Dendritic cell treated with granulocyte-macrophage colony-stimulating factor and Interleukin-4, amounts not matched to agents 40 ng/mL and 50 ng/mL, for 4 days (primary cell): ENCODE measurements at regions of chr5 and their contacts with region 1.

Region 1: GRCh38 chr5:143319437-143320227 is 83.9 kb downstream of the NR3C1 start:
- H3K4me3 Mint-ChIP-seq: no peak overlapping the region
- H3K27ac Mint-ChIP-seq: no peak overlapping the region
- H3K4me1 Mint-ChIP-seq: peaks cover 43% of the 10 kb centered on the region
- H3K27me3 Mint-ChIP-seq: no peaks in the 10 kb centered on the region

Region 2: GRCh38 chr5:143372187-143372829 is 52.7 kb after region 1 on chr5:
- intact Hi-C with region 1: loop called (anchors 5 kb)
- H3K4me3 Mint-ChIP-seq: no peak overlapping the region
- H3K27ac Mint-ChIP-seq: no peak overlapping the region
- H3K4me1 Mint-ChIP-seq: peaks cover 22% of the 10 kb centered on the region
- H3K27me3 Mint-ChIP-seq: no peaks in the 10 kb centered on the region

Region 3: GRCh38 chr5:143506881-143507551 is 187.4 kb after region 1 on chr5:
- intact Hi-C with region 1: no loop called
- H3K4me3 Mint-ChIP-seq: no peak overlapping the region
- H3K27ac Mint-ChIP-seq: no peak overlapping the region
- H3K4me1 Mint-ChIP-seq: no peaks in the 10 kb centered on the region
- H3K27me3 Mint-ChIP-seq: no peaks in the 10 kb centered on the region